Dendritic cell treated with granulocyte-macrophage colony-stimulating factor and Interleukin-4, amounts not matched to agents 40 ng/mL and 50 ng/mL, for 4 days (primary cell): ENCODE measurements at regions of chr11 and their contacts with region 1.

Region 1: DNA sequence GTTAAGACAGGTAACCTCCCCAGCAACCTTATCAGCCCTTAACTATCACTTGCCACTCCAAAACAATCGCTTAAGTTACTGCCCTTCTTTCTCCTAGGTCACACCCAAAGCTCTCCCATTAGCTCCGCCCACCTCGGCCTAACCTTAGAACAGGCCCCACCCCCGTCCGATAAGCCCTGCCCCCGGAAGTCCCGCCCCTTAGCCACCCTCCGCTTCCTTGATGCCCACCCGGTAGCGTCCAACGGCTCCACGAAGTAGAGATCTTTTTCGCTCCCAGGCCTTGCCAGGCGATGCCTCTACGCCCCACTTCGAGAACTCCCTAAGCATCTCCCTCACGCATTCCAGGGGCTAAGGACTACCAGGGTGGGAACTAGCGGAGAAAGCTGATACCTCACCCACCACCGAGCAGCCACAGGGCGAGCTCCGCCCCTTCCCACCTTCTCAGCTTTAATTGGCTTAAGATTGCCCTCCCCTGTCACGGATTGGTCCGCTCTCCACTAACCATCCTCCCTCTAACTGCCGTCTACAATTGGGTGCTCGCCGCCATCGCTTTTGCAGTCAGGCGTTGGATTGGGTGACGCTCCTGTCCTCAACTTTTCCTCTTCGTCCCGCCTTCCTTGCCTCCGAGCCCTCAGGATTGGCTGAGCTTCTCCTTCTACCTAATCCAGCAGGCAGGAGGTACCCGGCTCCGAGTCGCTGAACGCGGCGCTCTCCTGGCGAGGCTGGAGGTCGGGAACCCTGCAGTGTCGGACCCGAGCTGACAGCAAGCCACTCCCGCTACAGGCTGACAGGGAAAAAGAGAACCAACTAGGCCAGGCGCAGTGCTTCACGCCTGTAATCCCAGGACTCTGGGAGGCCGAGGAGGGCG is at the start of gene ZBTB3:
- H3K4me3 Mint-ChIP-seq: peak within 1 kb of the TSS; percentile 92
- H3K27ac Mint-ChIP-seq: peak within 1 kb of the TSS; percentile 98
- H3K4me1 Mint-ChIP-seq: peaks cover 34% of the 10 kb centered on the region
- H3K27me3 Mint-ChIP-seq: no peaks in the 10 kb centered on the region

Region 2: GRCh38 chr11:62542750-62543567 is 211.0 kb before region 1 on chr11:
- intact Hi-C with region 1: no loop called
- H3K4me3 Mint-ChIP-seq: peak overlapping the region; percentile 97
- H3K27ac Mint-ChIP-seq: peak overlapping the region; percentile 95
- H3K4me1 Mint-ChIP-seq: peaks cover 70% of the 10 kb centered on the region
- H3K27me3 Mint-ChIP-seq: peaks cover 3% of the 10 kb centered on the region

Region 3: GRCh38 chr11:62771144-62772021 is 17.4 kb after region 1 on chr11 and contains the start of gene TAF6L:
- intact Hi-C with region 1: loop called (anchors 2 kb)
- H3K4me3 Mint-ChIP-seq: peak within 1 kb of the TSS; percentile 85
- H3K27ac Mint-ChIP-seq: peak within 1 kb of the TSS; percentile 96
- H3K4me1 Mint-ChIP-seq: peaks cover 45% of the 10 kb centered on the region
- H3K27me3 Mint-ChIP-seq: no peaks in the 10 kb centered on the region

Region 4: GRCh38 chr11:62791501-62792201 is 37.7 kb after region 1 on chr11 and contains the start of gene TMEM223:
- intact Hi-C with region 1: no loop called
- H3K4me3 Mint-ChIP-seq: peak within 1 kb of the TSS; percentile 86
- H3K27ac Mint-ChIP-seq: peak within 1 kb of the TSS; percentile 89
- H3K4me1 Mint-ChIP-seq: peaks cover 53% of the 10 kb centered on the region
- H3K27me3 Mint-ChIP-seq: no peaks in the 10 kb centered on the region